Activated B cell treated with CpG ODN at 0.5 μM for 24 hours (primary cell): ENCODE measurements at regions of chr3 and their contacts with region 1.

Region 1: GRCh38 chr3:114408736-114409670 is 115.2 kb downstream of the TIGIT start:
- DNase-seq: no peak
- ATAC-seq: no peak
- H3K4me3 Mint-ChIP-seq: no peak overlapping the region
- H3K27ac Mint-ChIP-seq: peak overlapping the region; percentile 7
- H3K4me1 Mint-ChIP-seq: peaks cover 55% of the 10 kb centered on the region
- H3K27me3 Mint-ChIP-seq: no peaks in the 10 kb centered on the region
- CTCF ChIP-seq: no peak

Region 2: GRCh38 chr3:114393367-114394072 is 15.5 kb before region 1 on chr3:
- CTCF ChIA-PET with region 1: interaction called, 18 read pairs
- POLR2A ChIA-PET with region 1: interaction called, 4 read pairs
- intact Hi-C with region 1: no loop called
- DNase-seq: no peak
- ATAC-seq: no peak
- H3K4me3 Mint-ChIP-seq: no peak overlapping the region
- H3K27ac Mint-ChIP-seq: no peak overlapping the region
- H3K4me1 Mint-ChIP-seq: peaks cover 17% of the 10 kb centered on the region
- H3K27me3 Mint-ChIP-seq: no peaks in the 10 kb centered on the region
- CTCF ChIP-seq: no peak

Region 3: GRCh38 chr3:114442246-114442645 is 33.2 kb after region 1 on chr3:
- CTCF ChIA-PET with region 1: interaction called, 4 read pairs
- POLR2A ChIA-PET with region 1: interaction called, 11 read pairs
- intact Hi-C with region 1: no loop called
- DNase-seq: no peak
- ATAC-seq: no peak
- H3K4me3 Mint-ChIP-seq: no peak overlapping the region
- H3K27ac Mint-ChIP-seq: no peak overlapping the region
- H3K4me1 Mint-ChIP-seq: peaks cover 70% of the 10 kb centered on the region
- H3K27me3 Mint-ChIP-seq: no peaks in the 10 kb centered on the region
- CTCF ChIP-seq: no peak